ENCODE measurements at regions of chrX and their contacts with region 1.

Region 1: DNA sequence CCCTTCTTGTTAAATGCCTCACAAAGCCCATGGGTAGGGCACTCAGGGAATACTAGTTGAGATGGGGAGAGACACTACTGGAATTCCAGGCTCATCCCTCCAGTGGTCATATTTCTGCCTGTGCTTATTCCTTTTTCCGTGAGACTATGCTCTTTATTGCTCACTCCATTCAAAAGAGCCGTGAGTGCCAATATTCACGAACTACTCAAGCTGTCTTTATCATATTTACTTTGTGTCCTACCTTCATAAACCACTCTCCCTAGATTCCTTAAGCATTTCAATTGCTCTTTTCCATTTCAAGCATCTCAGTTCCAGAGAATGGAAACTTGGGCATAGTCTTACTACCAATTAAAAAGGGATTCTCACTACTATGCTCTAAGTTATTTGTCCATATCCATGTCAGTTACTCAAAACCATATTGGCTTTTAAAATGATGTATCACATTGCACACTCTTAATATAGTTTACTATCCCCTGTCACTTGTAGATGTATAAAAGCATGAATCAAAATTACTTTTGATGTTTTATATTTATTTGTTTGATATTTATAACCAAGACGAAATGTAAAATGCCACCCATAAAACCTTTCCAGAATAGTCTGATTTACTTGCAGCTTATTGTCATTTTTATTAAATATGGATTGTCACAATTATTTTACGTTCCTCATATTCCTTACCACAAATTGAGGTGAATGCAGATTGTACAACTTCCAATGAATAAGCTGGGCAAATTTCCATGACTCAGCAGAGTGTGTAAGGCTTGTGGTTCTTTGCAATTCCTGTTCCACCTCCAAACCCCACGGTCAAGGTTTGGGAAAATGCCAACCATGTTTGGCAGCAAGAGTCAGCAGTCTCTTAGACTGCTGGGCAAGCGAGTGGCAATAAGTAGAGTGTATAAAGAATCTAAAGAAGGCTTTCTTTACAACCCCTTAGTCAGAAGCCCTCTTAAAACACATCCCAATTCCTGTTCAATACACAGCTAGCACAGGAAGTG is 24.4 kb downstream of the ENOX2 start:
- DNase-seq: peak; percentile 85
- ATAC-seq: peak; percentile 54
- H3K4me3 ChIP-seq: no peak overlapping the region
- H3K27ac ChIP-seq: no peak overlapping the region
- H3K4me1 ChIP-seq: no peaks in the 10 kb centered on the region
- H3K27me3 ChIP-seq: no peaks in the 10 kb centered on the region; the same call in 1 of the 2 replicates
- CTCF ChIP-seq: no peak
- POLR2A ChIP-seq: no peak
- RAD21 ChIP-seq: no peak

Region 2: GRCh38 chrX:130834149-130834548 is 44.5 kb before region 1 on chrX:
- CTCF ChIA-PET with region 1: no interaction called
- POLR2A ChIA-PET with region 1: no interaction called
- dilution Hi-C with region 1: no loop called
- in situ Hi-C with region 1: no loop called
- intact Hi-C with region 1: loop called (anchors 1 kb)
- DNase-seq: no peak
- ATAC-seq: no peak
- H3K4me3 ChIP-seq: no peak overlapping the region
- H3K27ac ChIP-seq: no peak overlapping the region
- H3K4me1 ChIP-seq: no peaks in the 10 kb centered on the region
- H3K27me3 ChIP-seq: no peaks in the 10 kb centered on the region; the same call in 1 of the 2 replicates
- CTCF ChIP-seq: no peak
- POLR2A ChIP-seq: no peak
- RAD21 ChIP-seq: no peak

Region 3: GRCh38 chrX:130916636-130917422 is 38.2 kb after region 1 on chrX:
- CTCF ChIA-PET with region 1: no interaction called
- POLR2A ChIA-PET with region 1: no interaction called
- dilution Hi-C with region 1: no loop called
- in situ Hi-C with region 1: no loop called
- intact Hi-C with region 1: no loop called
- DNase-seq: peak; percentile 54
- ATAC-seq: peak; percentile 75
- H3K4me3 ChIP-seq: no peak overlapping the region
- H3K27ac ChIP-seq: no peak overlapping the region
- H3K4me1 ChIP-seq: no peaks in the 10 kb centered on the region
- H3K27me3 ChIP-seq: peaks cover 2% of the 10 kb centered on the region; the same call in 1 of the 2 replicates
- CTCF ChIP-seq: peak; percentile 80
- POLR2A ChIP-seq: no peak
- RAD21 ChIP-seq: peak; percentile 91

Measured in IMR-90 (cell line).